Left ventricle myocardium superior (tissue), 1 donor: ENCODE measurements at regions of chr18 and their contacts with region 1.

Region 1: DNA sequence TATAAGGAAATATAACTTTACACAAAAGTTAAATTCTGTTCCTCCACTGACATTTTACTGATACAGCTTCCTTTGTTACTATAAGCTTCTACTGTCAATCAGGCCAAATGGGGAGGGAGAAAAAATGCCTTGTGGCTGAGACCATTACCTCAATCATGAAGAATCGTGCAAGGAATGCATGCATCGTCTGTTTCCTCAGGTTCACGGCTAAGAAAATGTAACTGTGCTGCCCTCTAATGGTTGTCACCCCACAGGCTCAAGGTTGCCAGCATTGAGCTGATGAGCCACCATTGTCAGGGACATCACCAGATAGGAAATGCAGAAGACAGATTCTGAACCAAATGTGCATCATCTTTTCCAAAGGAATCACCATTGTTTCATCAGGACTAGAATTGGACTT is 426.9 kb downstream of the CDH2 start:
- DNase-seq: no peak
- ATAC-seq: peak; percentile 78

Region 2: DNA sequence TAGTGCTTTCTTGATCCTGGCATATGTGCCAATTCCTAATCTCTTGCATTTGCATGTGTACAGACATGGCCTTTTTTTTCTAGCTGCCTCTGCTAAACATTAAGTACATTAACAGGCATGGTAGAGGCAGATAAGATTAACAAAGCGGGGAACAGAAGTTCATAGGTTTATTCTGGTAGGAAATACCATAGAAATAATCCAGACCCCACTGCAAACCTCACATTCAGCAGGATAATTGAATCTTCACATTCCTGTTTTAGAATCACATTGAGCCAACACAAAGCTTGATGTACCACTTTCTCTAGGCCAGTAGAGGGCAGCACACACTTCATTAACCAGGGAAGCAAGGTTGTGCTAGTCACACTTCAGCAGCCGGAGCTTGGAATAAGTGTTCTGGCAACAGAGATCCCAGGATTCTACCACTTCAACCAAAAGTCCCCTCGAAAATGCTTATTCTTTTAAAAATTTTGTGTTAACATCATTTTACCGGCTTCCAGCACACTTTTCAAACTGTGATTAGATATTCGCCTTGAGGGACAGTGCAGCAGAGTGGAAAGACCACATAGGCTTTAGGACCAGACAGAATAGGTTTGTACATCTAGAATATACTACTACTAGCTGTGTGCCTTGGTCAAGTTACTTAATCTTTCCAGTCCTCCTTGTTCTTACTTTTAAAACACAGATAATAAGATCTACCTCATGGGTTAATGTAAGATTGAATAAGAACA is 144.7 kb before region 1 on chr18:
- intact Hi-C with region 1: loop called (anchors 1 kb)
- DNase-seq: no peak
- ATAC-seq: peak; percentile 92

Region 3: GRCh38 chr18:27685807-27686412 is 64.1 kb before region 1 on chr18:
- intact Hi-C with region 1: loop called (anchors 5 kb)
- DNase-seq: no peak
- ATAC-seq: no peak